ENCODE measurements at regions of chr18 and their contacts with region 1.

Region 1: DNA sequence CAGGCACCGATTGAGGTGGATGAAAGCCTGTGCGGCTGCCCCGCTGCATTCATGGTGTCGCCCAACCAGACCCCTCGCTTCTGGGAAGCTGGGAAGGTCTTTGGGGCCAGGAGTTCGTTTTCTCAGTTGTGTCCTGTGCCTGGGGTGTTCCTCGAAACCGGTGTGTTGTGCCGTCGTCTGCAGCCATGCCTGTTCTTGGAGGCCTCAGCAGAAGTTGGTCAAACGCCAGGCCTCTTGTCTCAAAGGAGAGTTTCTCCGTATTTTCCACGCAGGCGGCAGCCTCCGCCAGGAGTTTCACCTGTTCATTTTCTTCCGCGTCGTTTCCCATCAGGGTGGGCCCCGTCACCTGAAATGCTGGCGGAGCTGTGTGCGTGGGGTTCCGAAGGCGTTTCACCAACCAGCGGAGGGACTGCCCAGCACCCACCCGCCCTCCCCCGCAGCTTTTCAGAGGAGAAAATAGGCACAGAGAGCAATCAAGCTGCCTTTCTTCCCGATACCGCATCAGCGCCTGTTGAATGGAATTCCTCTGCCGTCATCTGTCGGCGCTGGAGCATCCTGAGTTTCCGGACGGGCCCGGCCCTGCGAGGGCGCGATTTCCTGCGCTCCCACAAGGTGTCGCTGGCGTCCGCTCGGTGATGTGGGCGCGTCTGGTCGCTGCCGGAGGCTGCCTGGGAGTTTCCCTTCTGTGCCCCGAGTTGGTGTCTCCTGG is 17.0 kb upstream of the NFATC1 start:
- DNase-seq: peak in 2 of 3 donors; percentile 75 to 76
- ATAC-seq: peak; percentile 56 to 84 (median 78)
- H3K4me3 ChIP-seq: no peak overlapping the region
- H3K27ac ChIP-seq: no peak overlapping the region
- H3K4me1 ChIP-seq: no peaks in the 10 kb centered on the region
- H3K27me3 ChIP-seq: no peaks in the 10 kb centered on the region
- CTCF ChIP-seq: peak; percentile 56 to 80 (median 76)
- POLR2A ChIP-seq: no peak

Region 2: DNA sequence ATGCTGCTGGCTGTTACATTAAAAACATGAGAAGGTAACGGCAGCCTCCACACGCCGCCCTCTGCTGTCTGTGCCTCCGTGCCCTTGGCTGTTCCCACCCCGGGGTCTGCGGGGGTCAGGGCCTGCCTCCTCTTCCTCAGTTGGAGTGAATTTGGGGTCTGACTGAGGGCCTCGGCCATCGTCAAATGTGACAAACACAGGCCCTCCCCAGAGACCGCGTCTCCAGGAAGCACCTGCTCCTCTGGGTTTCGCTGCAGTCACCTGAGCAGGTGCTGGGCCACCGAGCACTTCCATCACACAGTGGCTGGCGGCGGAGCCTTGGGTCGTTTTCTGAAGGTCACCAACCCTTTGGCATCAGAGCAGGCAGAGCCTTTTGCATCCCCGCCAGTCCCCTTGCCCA is 87.9 kb after region 1 on chr18:
- intact Hi-C with region 1: no loop called
- DNase-seq: no peak
- ATAC-seq: no peak
- H3K4me3 ChIP-seq: no peak overlapping the region
- H3K27ac ChIP-seq: no peak overlapping the region
- H3K4me1 ChIP-seq: no peaks in the 10 kb centered on the region
- H3K27me3 ChIP-seq: no peaks in the 10 kb centered on the region
- CTCF ChIP-seq: no peak
- POLR2A ChIP-seq: no peak

Region 3: GRCh38 chr18:79528846-79529245 is 150.2 kb after region 1 on chr18:
- intact Hi-C with region 1: loop called (anchors 5 kb)
- DNase-seq: peak in 2 of 3 donors; percentile 55 to 68
- ATAC-seq: peak; percentile 63 to 87 (median 74)
- H3K4me3 ChIP-seq: no peak overlapping the region
- H3K27ac ChIP-seq: no peak overlapping the region
- H3K4me1 ChIP-seq: no peaks in the 10 kb centered on the region
- H3K27me3 ChIP-seq: no peaks in the 10 kb centered on the region
- CTCF ChIP-seq: peak; percentile 75 to 82 (median 76)
- POLR2A ChIP-seq: no peak

Region 4: GRCh38 chr18:79644006-79644665 is 265.4 kb after region 1 on chr18:
- intact Hi-C with region 1: loop called (anchors 5 kb)
- DNase-seq: peak in 2 of 3 donors; percentile 59 to 64
- ATAC-seq: peak; percentile 81 to 95 (median 88)
- H3K4me3 ChIP-seq: no peak overlapping the region
- H3K27ac ChIP-seq: no peak overlapping the region
- H3K4me1 ChIP-seq: no peaks in the 10 kb centered on the region
- H3K27me3 ChIP-seq: no peaks in the 10 kb centered on the region
- CTCF ChIP-seq: peak; percentile 82 to 96 (median 94)
- POLR2A ChIP-seq: no peak